Activated B cell treated with CpG ODN at 0.5 μM for 24 hours (primary cell): ENCODE measurements at regions of chr1 and their contacts with region 1.

Region 1: DNA sequence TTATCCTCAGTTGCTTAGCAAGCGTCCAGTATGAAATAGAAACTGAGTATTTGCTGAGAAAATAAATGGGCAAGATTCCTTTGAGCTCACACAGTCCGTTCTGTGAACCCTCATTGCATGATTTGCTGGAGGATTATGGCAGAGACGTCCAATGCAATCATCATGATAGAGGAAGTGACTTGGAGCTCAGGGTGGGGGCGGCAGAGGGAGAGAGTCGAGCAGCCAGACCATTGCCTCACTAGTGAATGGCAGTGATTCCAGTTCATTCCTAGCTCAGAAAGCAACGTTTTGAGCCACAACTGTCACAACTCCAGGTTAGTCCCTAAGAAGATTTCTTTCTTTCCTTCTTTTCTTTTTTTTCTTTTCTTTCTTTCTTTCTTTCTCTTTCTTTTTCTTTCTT is 27.5 kb upstream of the COL9A2 start:
- DNase-seq: no peak
- ATAC-seq: peak; percentile 85
- H3K4me3 Mint-ChIP-seq: peak overlapping the region; percentile 75
- H3K27ac Mint-ChIP-seq: peak overlapping the region; percentile 80
- H3K4me1 Mint-ChIP-seq: peaks cover 53% of the 10 kb centered on the region
- H3K27me3 Mint-ChIP-seq: no peaks in the 10 kb centered on the region
- CTCF ChIP-seq: no peak

Region 2: GRCh38 chr1:39936724-39937491 is 407.7 kb before region 1 on chr1:
- CTCF ChIA-PET with region 1: no interaction called
- POLR2A ChIA-PET with region 1: no interaction called
- intact Hi-C with region 1: no loop called
- DNase-seq: no peak
- ATAC-seq: no peak
- H3K4me3 Mint-ChIP-seq: no peak overlapping the region
- H3K27ac Mint-ChIP-seq: no peak overlapping the region
- H3K4me1 Mint-ChIP-seq: peaks cover 4% of the 10 kb centered on the region
- H3K27me3 Mint-ChIP-seq: no peaks in the 10 kb centered on the region
- CTCF ChIP-seq: no peak

Region 3: DNA sequence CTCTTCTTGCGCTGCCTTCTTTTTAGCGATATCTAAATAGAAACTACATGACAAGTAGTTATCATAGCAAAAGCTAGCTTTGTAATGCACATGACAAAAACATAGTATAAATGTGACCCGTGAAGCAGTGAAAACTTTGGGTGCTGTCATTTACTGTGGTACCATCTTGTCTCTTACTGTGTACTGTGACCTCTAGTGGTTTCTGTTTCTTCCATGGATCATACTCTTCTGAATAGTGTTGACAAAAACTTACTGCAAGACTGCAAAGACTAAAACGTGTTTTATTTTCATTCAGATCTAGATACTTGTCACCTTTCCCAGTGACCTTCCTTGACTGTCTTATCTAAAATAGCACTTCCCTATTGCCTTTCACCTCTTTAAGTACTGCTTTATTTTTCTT is 177.3 kb before region 1 on chr1:
- CTCF ChIA-PET with region 1: interaction called, 13 read pairs
- POLR2A ChIA-PET with region 1: interaction called, 10 read pairs
- intact Hi-C with region 1: no loop called
- DNase-seq: no peak
- ATAC-seq: no peak
- H3K4me3 Mint-ChIP-seq: no peak overlapping the region
- H3K27ac Mint-ChIP-seq: no peak overlapping the region
- H3K4me1 Mint-ChIP-seq: peaks cover 39% of the 10 kb centered on the region
- H3K27me3 Mint-ChIP-seq: no peaks in the 10 kb centered on the region
- CTCF ChIP-seq: no peak

Region 4: GRCh38 chr1:40224040-40224439 is 120.6 kb before region 1 on chr1:
- CTCF ChIA-PET with region 1: no interaction called
- POLR2A ChIA-PET with region 1: no interaction called
- intact Hi-C with region 1: no loop called
- DNase-seq: no peak
- ATAC-seq: no peak
- H3K4me3 Mint-ChIP-seq: no peak overlapping the region
- H3K27ac Mint-ChIP-seq: no peak overlapping the region
- H3K4me1 Mint-ChIP-seq: no peaks in the 10 kb centered on the region
- H3K27me3 Mint-ChIP-seq: no peaks in the 10 kb centered on the region
- CTCF ChIP-seq: no peak

Region 5: GRCh38 chr1:40291293-40291692 is 53.3 kb before region 1 on chr1:
- CTCF ChIA-PET with region 1: no interaction called
- POLR2A ChIA-PET with region 1: interaction called, 12 read pairs
- intact Hi-C with region 1: no loop called
- DNase-seq: no peak
- ATAC-seq: no peak
- H3K4me3 Mint-ChIP-seq: no peak overlapping the region
- H3K27ac Mint-ChIP-seq: no peak overlapping the region
- H3K4me1 Mint-ChIP-seq: peaks cover 9% of the 10 kb centered on the region
- H3K27me3 Mint-ChIP-seq: no peaks in the 10 kb centered on the region
- CTCF ChIP-seq: no peak

Region 6: DNA sequence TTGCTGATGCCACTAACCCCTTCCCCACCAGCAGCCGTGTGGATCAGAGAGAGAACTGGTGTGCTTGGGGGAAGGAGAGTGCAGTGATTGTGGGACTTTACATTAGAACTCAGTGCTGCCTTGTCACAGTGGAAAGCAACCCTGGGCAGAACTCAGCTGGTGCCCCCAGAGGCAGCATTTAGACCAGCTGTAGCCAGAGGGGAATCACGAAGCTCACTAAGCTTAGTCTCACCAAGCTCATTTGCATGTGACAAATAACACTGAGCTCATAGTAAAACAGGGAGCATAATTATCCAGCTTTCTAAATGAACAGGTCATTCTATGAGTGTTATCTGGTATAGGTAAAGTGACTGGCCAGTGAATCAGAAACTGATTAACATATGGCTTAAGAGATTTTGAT is 19.1 kb after region 1 on chr1:
- CTCF ChIA-PET with region 1: interaction called, 45 read pairs
- POLR2A ChIA-PET with region 1: interaction called, 14 read pairs
- intact Hi-C with region 1: no loop called
- DNase-seq: peak; percentile 45
- ATAC-seq: peak; percentile 100
- H3K4me3 Mint-ChIP-seq: peak overlapping the region; percentile 5
- H3K27ac Mint-ChIP-seq: peak overlapping the region; percentile 74
- H3K4me1 Mint-ChIP-seq: peaks cover 19% of the 10 kb centered on the region
- H3K27me3 Mint-ChIP-seq: no peaks in the 10 kb centered on the region
- CTCF ChIP-seq: no peak

Region 7: GRCh38 chr1:40373338-40374283 is 29.0 kb after region 1 on chr1 and contains the start of gene SMAP2:
- CTCF ChIA-PET with region 1: interaction called, 25 read pairs
- POLR2A ChIA-PET with region 1: interaction called, 76 read pairs
- intact Hi-C with region 1: no loop called
- DNase-seq: peak; percentile 91
- ATAC-seq: peak; percentile 88
- H3K4me3 Mint-ChIP-seq: peak within 1 kb of the TSS; percentile 97
- H3K27ac Mint-ChIP-seq: peak within 1 kb of the TSS; percentile 96
- H3K4me1 Mint-ChIP-seq: peaks cover 52% of the 10 kb centered on the region
- H3K27me3 Mint-ChIP-seq: no peaks in the 10 kb centered on the region
- CTCF ChIP-seq: no peak
- total RNA-seq, gene SMAP2: 202 and 220 TPM in 2 replicates

Region 8: GRCh38 chr1:40385437-40386358 is 41.1 kb after region 1 on chr1:
- CTCF ChIA-PET with region 1: interaction called, 39 read pairs
- POLR2A ChIA-PET with region 1: interaction called, 75 read pairs
- intact Hi-C with region 1: no loop called
- DNase-seq: no peak
- ATAC-seq: peak; percentile 71
- H3K4me3 Mint-ChIP-seq: peak overlapping the region; percentile 74
- H3K27ac Mint-ChIP-seq: peak overlapping the region; percentile 96
- H3K4me1 Mint-ChIP-seq: peaks cover 97% of the 10 kb centered on the region
- H3K27me3 Mint-ChIP-seq: no peaks in the 10 kb centered on the region
- CTCF ChIP-seq: no peak

Region 9: GRCh38 chr1:40449684-40450494 is 105.3 kb after region 1 on chr1 and contains the start of gene ZFP69B:
- CTCF ChIA-PET with region 1: no interaction called
- POLR2A ChIA-PET with region 1: no interaction called
- intact Hi-C with region 1: no loop called
- DNase-seq: peak; percentile 97
- ATAC-seq: peak; percentile 80
- H3K4me3 Mint-ChIP-seq: peak within 1 kb of the TSS; percentile 86
- H3K27ac Mint-ChIP-seq: peak within 1 kb of the TSS; percentile 90
- H3K4me1 Mint-ChIP-seq: peaks cover 30% of the 10 kb centered on the region
- H3K27me3 Mint-ChIP-seq: no peaks in the 10 kb centered on the region
- CTCF ChIP-seq: no peak
- total RNA-seq, gene ZFP69B: 8.9 and 10.4 TPM in 2 replicates

Region 10: GRCh38 chr1:40976952-40977690 is 632.5 kb after region 1 on chr1:
- CTCF ChIA-PET with region 1: no interaction called
- POLR2A ChIA-PET with region 1: no interaction called
- intact Hi-C with region 1: no loop called
- DNase-seq: no peak
- ATAC-seq: no peak
- H3K4me3 Mint-ChIP-seq: no peak overlapping the region
- H3K27ac Mint-ChIP-seq: no peak overlapping the region
- H3K4me1 Mint-ChIP-seq: peaks cover 16% of the 10 kb centered on the region
- H3K27me3 Mint-ChIP-seq: no peaks in the 10 kb centered on the region
- CTCF ChIP-seq: no peak